Activated B cell treated with CpG ODN at 0.5 μM for 24 hours (primary cell): ENCODE measurements at regions of chr16 and their contacts with region 1.

Region 1: GRCh38 chr16:48156790-48157209 is 1.0 kb upstream of the ABCC12 start:
- DNase-seq: peak; percentile 77
- ATAC-seq: peak; percentile 54
- H3K4me3 Mint-ChIP-seq: no peak overlapping the region
- H3K27ac Mint-ChIP-seq: no peak overlapping the region
- H3K4me1 Mint-ChIP-seq: peaks cover 6% of the 10 kb centered on the region
- H3K27me3 Mint-ChIP-seq: peaks cover 8% of the 10 kb centered on the region
- CTCF ChIP-seq: peak; percentile 68

Region 2: GRCh38 chr16:46853713-46854443 is 1302.9 kb before region 1 on chr16:
- CTCF ChIA-PET with region 1: no interaction called
- POLR2A ChIA-PET with region 1: no interaction called
- intact Hi-C with region 1: loop called (anchors 2 kb)
- DNase-seq: peak; percentile 53
- ATAC-seq: peak; percentile 72
- H3K4me3 Mint-ChIP-seq: no peak overlapping the region
- H3K27ac Mint-ChIP-seq: no peak overlapping the region
- H3K4me1 Mint-ChIP-seq: peaks cover 17% of the 10 kb centered on the region
- H3K27me3 Mint-ChIP-seq: no peaks in the 10 kb centered on the region
- CTCF ChIP-seq: peak; percentile 63

Region 3: DNA sequence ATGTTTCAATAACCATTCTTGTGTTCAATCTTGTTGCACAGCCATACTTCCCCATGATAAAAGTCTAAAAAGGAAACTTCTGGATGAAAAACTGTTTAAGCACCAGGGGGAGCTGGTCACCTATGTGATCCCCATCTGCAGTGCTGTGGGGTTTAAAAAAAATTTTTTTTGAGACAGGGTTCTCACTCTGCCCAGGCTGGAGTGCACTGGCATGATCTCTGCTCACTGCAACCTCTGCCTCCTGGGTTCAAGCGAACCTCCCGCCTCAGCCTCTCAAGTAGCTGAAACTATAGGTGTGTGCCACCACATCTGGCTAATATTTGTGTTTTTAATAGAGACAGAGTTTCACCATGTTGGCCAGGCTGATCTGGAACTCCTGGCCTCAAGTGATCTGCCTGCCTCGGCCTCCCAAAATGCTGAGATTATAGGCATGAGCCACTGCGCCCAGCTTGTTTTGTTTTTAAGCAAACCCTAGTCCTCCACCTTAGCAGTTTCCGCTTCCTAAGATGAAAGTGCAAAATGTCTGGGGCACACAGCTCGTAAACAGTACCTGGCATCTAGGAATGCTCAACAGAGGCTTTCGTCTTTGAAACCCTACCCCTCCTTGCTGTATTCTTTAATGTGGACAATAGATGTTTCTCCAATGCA is 1208.8 kb before region 1 on chr16:
- CTCF ChIA-PET with region 1: interaction called, 4 read pairs
- POLR2A ChIA-PET with region 1: no interaction called
- intact Hi-C with region 1: loop called (anchors 1 kb)
- DNase-seq: no peak
- ATAC-seq: peak; percentile 74
- H3K4me3 Mint-ChIP-seq: no peak overlapping the region
- H3K27ac Mint-ChIP-seq: no peak overlapping the region
- H3K4me1 Mint-ChIP-seq: peaks cover 7% of the 10 kb centered on the region
- H3K27me3 Mint-ChIP-seq: no peaks in the 10 kb centered on the region
- CTCF ChIP-seq: no peak

Region 4: GRCh38 chr16:46973207-46973995 is 1183.4 kb before region 1 on chr16 and contains the start of gene DNAJA2:
- CTCF ChIA-PET with region 1: no interaction called
- POLR2A ChIA-PET with region 1: no interaction called
- intact Hi-C with region 1: loop called (anchors 1 kb)
- DNase-seq: peak; percentile 94
- ATAC-seq: peak; percentile 93
- H3K4me3 Mint-ChIP-seq: peak within 1 kb of the TSS; percentile 95
- H3K27ac Mint-ChIP-seq: peak within 1 kb of the TSS; percentile 98
- H3K4me1 Mint-ChIP-seq: peaks cover 44% of the 10 kb centered on the region
- H3K27me3 Mint-ChIP-seq: no peaks in the 10 kb centered on the region
- CTCF ChIP-seq: no peak
- total RNA-seq, gene DNAJA2: 54.4 and 57.1 TPM in 2 replicates

Region 5: GRCh38 chr16:47258874-47259461 is 897.8 kb before region 1 on chr16:
- CTCF ChIA-PET with region 1: no interaction called
- POLR2A ChIA-PET with region 1: no interaction called
- intact Hi-C with region 1: loop called (anchors 1 kb)
- DNase-seq: no peak
- ATAC-seq: no peak
- H3K4me3 Mint-ChIP-seq: no peak overlapping the region
- H3K27ac Mint-ChIP-seq: no peak overlapping the region
- H3K4me1 Mint-ChIP-seq: no peaks in the 10 kb centered on the region
- H3K27me3 Mint-ChIP-seq: no peaks in the 10 kb centered on the region
- CTCF ChIP-seq: peak; percentile 92

Region 6: GRCh38 chr16:48632137-48632774 is 475.5 kb after region 1 on chr16:
- CTCF ChIA-PET with region 1: no interaction called
- POLR2A ChIA-PET with region 1: no interaction called
- intact Hi-C with region 1: loop called (anchors 1 kb)
- DNase-seq: no peak
- ATAC-seq: no peak
- H3K4me3 Mint-ChIP-seq: no peak overlapping the region
- H3K27ac Mint-ChIP-seq: no peak overlapping the region
- H3K4me1 Mint-ChIP-seq: peaks cover 8% of the 10 kb centered on the region
- H3K27me3 Mint-ChIP-seq: peaks cover 12% of the 10 kb centered on the region
- CTCF ChIP-seq: no peak